ENCODE measurements at regions of chr9 and their contacts with region 1.

Region 1: GRCh38 chr9:125495172-125496092 is 211.6 kb downstream of the MAPKAP1 start:
- DNase-seq: no peak
- ATAC-seq: no peak
- H3K4me3 ChIP-seq: no peak overlapping the region
- H3K27ac ChIP-seq: no peak overlapping the region
- H3K4me1 ChIP-seq: peaks cover 0 to 8% (median 0%) of the 10 kb centered on the region in 9 donors
- H3K27me3 ChIP-seq: no peaks in the 10 kb centered on the region
- CTCF ChIP-seq: no peak

Region 2: GRCh38 chr9:125433461-125434011 is 61.9 kb before region 1 on chr9:
- intact Hi-C with region 1: loop called in 1 of 10 experiments (anchors 10 kb)
- DNase-seq: no peak
- ATAC-seq: no peak
- H3K4me3 ChIP-seq: no peak overlapping the region
- H3K27ac ChIP-seq: no peak overlapping the region
- H3K4me1 ChIP-seq: peaks cover 0 to 11% (median 0%) of the 10 kb centered on the region in 9 donors
- H3K27me3 ChIP-seq: no peaks in the 10 kb centered on the region
- CTCF ChIP-seq: no peak

Measured in heart right ventricle (tissue), 16 donors.